Adrenal gland (tissue), 19 donors: ENCODE measurements at regions of chr3 and their contacts with region 1.

Region 1: GRCh38 chr3:158672293-158673176 is at the start of gene LXN:
- DNase-seq: peak; percentile 83 to 92 (median 87)
- H3K4me3 ChIP-seq: peak within 1 kb of the TSS in 2 of 4 donors; percentile 58 to 70
- H3K27ac ChIP-seq: peak within 1 kb of the TSS; percentile 4 to 86 (median 73)
- H3K4me1 ChIP-seq: peaks cover 10 to 21% of the 10 kb centered on the region in 2 donors
- H3K27me3 ChIP-seq: no peaks in the 10 kb centered on the region
- CTCF ChIP-seq: peak; percentile 41 to 78 (median 64)
- POLR2A ChIP-seq: peak in 1 of 2 donors; percentile 68
- total RNA-seq, gene LXN: 20.5 to 100 (median 59.8) TPM

Region 2: GRCh38 chr3:158727206-158728060 is 54.9 kb after region 1 on chr3:
- intact Hi-C with region 1: loop called in 1 of 2 experiments (anchors 10 kb)
- DNase-seq: peak; percentile 53 to 81 (median 65)
- H3K4me3 ChIP-seq: peak overlapping the region in 1 of 4 donors; percentile 32
- H3K27ac ChIP-seq: peak overlapping the region in 2 of 5 donors; percentile 24 to 86
- H3K4me1 ChIP-seq: peaks cover 14 to 69% of the 10 kb centered on the region in 2 donors
- H3K27me3 ChIP-seq: no peaks in the 10 kb centered on the region
- CTCF ChIP-seq: peak; percentile 84 to 95 (median 87)
- POLR2A ChIP-seq: no peak

Region 3: DNA sequence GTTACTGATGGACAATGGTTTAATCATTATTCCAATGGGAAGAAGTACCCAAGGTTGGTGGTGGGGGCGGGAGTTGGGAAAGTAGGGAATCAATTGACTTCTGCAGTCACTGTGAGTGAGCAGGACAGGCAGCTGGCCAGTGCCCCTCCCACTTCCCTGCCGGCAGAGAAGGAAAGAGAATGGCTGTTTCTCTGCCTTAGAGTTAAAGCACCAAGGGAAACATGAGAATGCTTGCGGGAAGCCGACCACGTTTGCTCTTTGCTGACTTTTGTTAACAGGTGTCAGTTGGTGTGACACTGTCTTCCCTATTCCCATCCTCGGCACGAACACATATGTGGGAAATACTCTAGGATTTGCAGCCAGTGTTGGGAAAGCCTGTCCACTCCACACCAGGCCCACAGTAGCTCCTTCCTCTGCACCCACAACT is 95.8 kb after region 1 on chr3:
- intact Hi-C with region 1: no loop called
- DNase-seq: peak in 5 of 7 donors; percentile 51 to 79 (median 63)
- H3K4me3 ChIP-seq: no peak overlapping the region
- H3K27ac ChIP-seq: peak overlapping the region in 3 of 5 donors; percentile 13 to 82 (median 67)
- H3K4me1 ChIP-seq: peaks cover 0 to 30% of the 10 kb centered on the region in 2 donors
- H3K27me3 ChIP-seq: no peaks in the 10 kb centered on the region
- CTCF ChIP-seq: no peak
- POLR2A ChIP-seq: no peak

Region 4: GRCh38 chr3:158790901-158791589 is 118.5 kb after region 1 on chr3:
- intact Hi-C with region 1: loop called in 1 of 2 experiments (anchors 10 kb)
- DNase-seq: peak in 5 of 7 donors; percentile 37 to 64 (median 53)
- H3K4me3 ChIP-seq: peak overlapping the region in 1 of 4 donors; percentile 45
- H3K27ac ChIP-seq: no peak overlapping the region
- H3K4me1 ChIP-seq: no peaks in the 10 kb centered on the region
- H3K27me3 ChIP-seq: no peaks in the 10 kb centered on the region
- CTCF ChIP-seq: peak; percentile 57 to 88 (median 82)
- POLR2A ChIP-seq: no peak